Activated T-helper 2 cell treated with anti-CD3 and anti-CD28 coated beads, Interferon-gamma antibody, Interleukin-2, Interleukin-4, amounts not matched to agents 10 μg/mL and 5 μg/mL and 100 μg/mL, durations not matched to agents 14 hours and 24 hours and 36 hours (primary cell): ENCODE measurements at regions of chr13 and their contacts with region 1.

Region 1: DNA sequence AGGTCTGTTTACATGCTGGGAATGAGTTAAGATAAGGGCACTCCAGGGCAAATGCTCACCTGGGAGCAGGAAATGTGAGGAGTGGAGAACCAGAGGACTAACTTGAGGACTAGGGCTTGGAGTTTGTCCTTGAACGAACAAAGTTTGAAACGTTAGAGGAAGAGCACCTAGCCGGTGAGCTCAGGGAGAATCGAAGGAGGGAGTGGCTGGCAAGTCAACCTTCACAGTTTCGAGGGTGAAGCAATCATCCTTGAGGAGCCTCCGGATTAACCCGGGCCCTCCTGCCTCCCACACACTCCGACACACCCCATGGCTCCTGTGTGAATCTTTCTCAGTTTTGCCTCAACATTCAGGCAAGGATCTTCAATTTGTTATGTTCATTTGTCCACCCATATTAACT is 58.6 kb downstream of the LMO7 start:
- DNase-seq: no peak
- H3K4me3 Mint-ChIP-seq: no peak overlapping the region
- H3K27ac Mint-ChIP-seq: no peak overlapping the region
- H3K4me1 Mint-ChIP-seq: no peaks in the 10 kb centered on the region
- H3K27me3 Mint-ChIP-seq: no peaks in the 10 kb centered on the region

Region 2: DNA sequence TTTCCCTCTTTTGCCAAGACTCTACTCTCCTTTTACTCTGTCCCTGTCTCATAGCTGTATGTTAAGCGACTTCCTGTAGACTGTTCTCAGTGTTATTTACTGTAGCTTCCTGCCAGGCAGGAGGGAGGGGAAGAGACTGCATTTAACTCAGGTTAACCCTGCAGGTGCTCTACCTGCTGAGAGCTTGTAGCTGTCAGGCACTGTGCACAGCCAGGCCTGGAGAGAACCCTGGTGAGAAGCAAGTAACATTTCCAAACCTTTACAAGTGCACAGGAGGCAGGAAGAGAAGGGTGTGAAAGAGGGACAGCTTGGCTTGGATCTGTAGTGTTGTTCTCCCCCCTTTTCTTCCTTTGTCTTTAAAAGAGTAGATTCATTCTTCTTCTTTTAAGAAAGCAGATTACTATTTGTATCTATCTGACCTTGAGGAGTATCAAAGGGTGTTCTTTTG is 108.5 kb after region 1 on chr13:
- intact Hi-C with region 1: loop called (anchors 5 kb)
- DNase-seq: no peak
- H3K4me3 Mint-ChIP-seq: no peak overlapping the region
- H3K27ac Mint-ChIP-seq: no peak overlapping the region
- H3K4me1 Mint-ChIP-seq: peaks cover 46% of the 10 kb centered on the region
- H3K27me3 Mint-ChIP-seq: no peaks in the 10 kb centered on the region

Region 3: DNA sequence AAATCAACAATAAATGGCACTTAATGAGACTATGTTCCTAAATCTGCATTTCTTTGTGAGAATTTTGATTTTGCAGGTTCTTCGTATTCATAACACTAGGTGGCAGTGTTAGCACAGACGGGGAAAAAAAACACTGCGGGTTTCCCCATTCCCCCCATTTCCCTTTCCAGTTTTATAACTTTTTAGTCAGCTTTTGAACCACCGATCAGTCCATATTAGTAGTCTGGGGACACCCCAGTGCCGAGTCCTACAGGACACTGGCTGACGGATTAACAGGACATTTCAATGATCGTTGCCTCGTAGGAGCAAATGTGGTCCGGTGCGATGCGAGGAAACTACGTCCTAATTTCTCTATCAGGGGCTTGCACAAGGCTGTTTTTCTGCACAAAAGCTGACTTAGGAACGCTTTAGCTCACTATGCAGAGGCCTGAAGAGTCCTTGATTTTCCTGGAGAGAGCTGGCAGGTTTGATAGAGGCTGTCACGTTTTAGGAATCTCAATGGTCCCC is 175.7 kb after region 1 on chr13:
- intact Hi-C with region 1: loop called (anchors 2 kb)
- DNase-seq: peak; percentile 10
- H3K4me3 Mint-ChIP-seq: peak overlapping the region; percentile 63
- H3K27ac Mint-ChIP-seq: no peak overlapping the region
- H3K4me1 Mint-ChIP-seq: peaks cover 30% of the 10 kb centered on the region
- H3K27me3 Mint-ChIP-seq: peaks cover 13% of the 10 kb centered on the region

Region 4: DNA sequence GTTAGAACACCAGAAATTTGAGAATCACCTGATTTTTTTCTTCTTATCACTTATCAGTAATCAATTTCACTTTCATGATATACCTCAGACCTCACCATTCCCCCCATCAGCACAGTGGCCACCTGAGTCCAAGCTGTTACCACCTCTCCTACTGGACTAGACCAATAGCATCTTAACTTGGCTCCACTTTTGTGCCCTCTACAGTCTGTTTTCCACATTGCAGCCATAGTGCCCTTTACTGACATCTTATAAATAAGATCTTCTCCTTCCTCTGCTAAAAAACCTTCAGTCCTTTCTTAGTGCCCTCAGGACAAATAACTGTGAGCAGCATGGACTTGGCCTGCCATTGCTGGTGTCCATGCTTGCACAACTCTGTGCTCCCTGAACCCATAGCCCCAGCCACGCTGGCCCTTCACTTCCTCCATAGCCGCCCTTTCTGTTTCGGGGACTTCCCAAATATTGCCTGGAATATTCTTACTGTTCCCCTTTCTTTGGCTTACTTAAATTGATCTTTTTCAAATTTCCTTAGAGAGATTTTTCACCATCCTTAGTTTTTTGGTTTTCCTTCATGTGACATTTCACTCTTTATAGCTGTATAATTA is 322.2 kb after region 1 on chr13:
- intact Hi-C with region 1: loop called (anchors 2 kb)
- DNase-seq: no peak
- H3K4me3 Mint-ChIP-seq: no peak overlapping the region
- H3K27ac Mint-ChIP-seq: no peak overlapping the region
- H3K4me1 Mint-ChIP-seq: no peaks in the 10 kb centered on the region
- H3K27me3 Mint-ChIP-seq: no peaks in the 10 kb centered on the region

Region 5: GRCh38 chr13:76473552-76474134 is 778.9 kb after region 1 on chr13:
- intact Hi-C with region 1: loop called (anchors 1 kb)
- DNase-seq: peak; percentile 45
- H3K4me3 Mint-ChIP-seq: no peak overlapping the region
- H3K27ac Mint-ChIP-seq: no peak overlapping the region
- H3K4me1 Mint-ChIP-seq: no peaks in the 10 kb centered on the region
- H3K27me3 Mint-ChIP-seq: peaks cover 3% of the 10 kb centered on the region